GM12878 (cell line): ENCODE measurements at regions of chr10 and their contacts with region 1.

Region 1: DNA sequence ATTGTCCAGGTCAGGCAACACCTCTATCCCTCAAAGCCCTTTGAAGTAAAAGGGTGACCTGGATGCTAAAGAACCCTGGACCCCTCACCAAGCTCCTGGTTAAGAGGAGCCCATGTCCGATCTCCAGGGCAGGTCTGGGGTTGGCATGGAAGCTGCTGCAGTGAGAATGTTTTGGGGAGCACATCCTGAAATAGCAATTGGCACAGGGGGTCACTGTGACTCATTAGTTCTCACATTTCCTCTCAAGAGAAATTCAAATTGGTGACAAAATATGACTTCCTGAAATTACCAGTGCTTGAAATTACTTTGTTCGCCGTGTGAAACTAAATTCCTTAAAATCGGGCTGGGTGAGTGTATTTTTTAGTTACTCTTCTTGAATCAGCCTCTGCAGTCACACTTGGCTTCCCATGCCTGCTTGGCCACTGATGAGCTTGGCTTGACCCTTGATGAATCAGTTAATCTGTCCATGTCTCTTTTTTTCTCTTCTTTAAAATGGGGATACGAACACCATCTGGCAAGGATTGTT is 18.8 kb upstream of the ARHGAP22 start:
- DNase-seq: no peak
- ATAC-seq: no peak
- H3K4me3 ChIP-seq: no peak overlapping the region
- H3K27ac ChIP-seq: no peak overlapping the region
- H3K4me1 ChIP-seq: peaks cover 4% of the 10 kb centered on the region; the same call in 1 of the 2 replicates
- H3K27me3 ChIP-seq: no peaks in the 10 kb centered on the region
- CTCF ChIP-seq: no peak
- EP300 ChIP-seq: no peak
- POLR2A ChIP-seq: no peak
- RAD21 ChIP-seq: no peak

Region 2: GRCh38 chr10:48634198-48634983 is 10.7 kb after region 1 on chr10:
- CTCF ChIA-PET with region 1: interaction called, 20 read pairs
- POLR2A ChIA-PET with region 1: interaction called, 13 read pairs
- RAD21 ChIA-PET with region 1: interaction called, 16 read pairs
- SMC1A ChIA-PET with region 1: interaction called, 39 read pairs
- in situ Hi-C with region 1: no loop called
- intact Hi-C with region 1: no loop called
- DNase-seq: peak; percentile 91
- ATAC-seq: peak; percentile 97
- H3K4me3 ChIP-seq: no peak overlapping the region
- H3K27ac ChIP-seq: peak overlapping the region; percentile 45
- H3K4me1 ChIP-seq: peaks cover 38% of the 10 kb centered on the region
- H3K27me3 ChIP-seq: no peaks in the 10 kb centered on the region
- CTCF ChIP-seq: no peak
- EP300 ChIP-seq: peak; percentile 35 to 41; a peak in 1 of 4 replicates
- POLR2A ChIP-seq: no peak
- RAD21 ChIP-seq: no peak

Region 3: GRCh38 chr10:48639632-48640031 is 16.0 kb after region 1 on chr10:
- CTCF ChIA-PET with region 1: interaction called, 20 read pairs
- POLR2A ChIA-PET with region 1: interaction called, 13 read pairs
- RAD21 ChIA-PET with region 1: interaction called, 16 read pairs
- SMC1A ChIA-PET with region 1: interaction called, 39 read pairs
- in situ Hi-C with region 1: no loop called
- intact Hi-C with region 1: no loop called
- DNase-seq: no peak
- ATAC-seq: peak; percentile 30
- H3K4me3 ChIP-seq: peak overlapping the region; percentile 10; the same call in 1 of the 2 replicates
- H3K27ac ChIP-seq: peak overlapping the region; percentile 53; the same call in 1 of the 2 replicates
- H3K4me1 ChIP-seq: peaks cover 19% of the 10 kb centered on the region
- H3K27me3 ChIP-seq: no peaks in the 10 kb centered on the region
- CTCF ChIP-seq: no peak
- EP300 ChIP-seq: no peak
- POLR2A ChIP-seq: no peak
- RAD21 ChIP-seq: no peak

Region 4: DNA sequence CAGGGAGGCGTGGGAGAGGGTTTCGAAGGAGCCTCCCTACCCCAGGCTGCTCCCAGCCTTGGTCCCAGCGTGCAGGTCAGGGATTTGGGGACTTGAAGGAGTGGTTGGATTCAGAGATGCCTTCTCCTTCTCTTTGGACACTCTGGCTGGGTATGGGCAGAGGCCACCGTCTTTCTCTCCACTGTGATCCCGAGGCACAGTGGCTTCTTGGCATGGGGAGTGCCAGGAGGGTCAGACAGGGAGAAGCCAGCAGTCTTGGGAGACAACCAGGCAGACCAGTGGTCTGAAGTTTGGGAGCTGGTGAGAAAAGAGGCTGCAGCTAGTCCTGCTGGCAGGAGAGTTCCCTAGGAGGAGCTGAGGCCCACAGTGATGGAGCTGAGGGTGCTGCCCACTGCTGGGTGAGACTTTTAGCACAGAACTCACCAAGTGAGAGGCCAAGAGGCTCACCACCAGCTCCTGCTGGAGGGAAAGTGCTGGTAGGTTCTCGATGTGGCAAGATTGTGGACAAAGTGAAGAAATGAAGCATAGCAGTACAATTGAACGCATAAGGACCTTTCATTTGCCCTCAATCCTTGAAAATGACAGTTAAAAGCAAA is 25.8 kb after region 1 on chr10:
- CTCF ChIA-PET with region 1: interaction called, 11 read pairs
- POLR2A ChIA-PET with region 1: no interaction called
- RAD21 ChIA-PET with region 1: interaction called, 33 read pairs
- SMC1A ChIA-PET with region 1: interaction called, 4 read pairs
- in situ Hi-C with region 1: no loop called
- intact Hi-C with region 1: no loop called
- DNase-seq: no peak
- ATAC-seq: peak; percentile 36; the same call in 2 of the 3 replicates
- H3K4me3 ChIP-seq: no peak overlapping the region
- H3K27ac ChIP-seq: no peak overlapping the region
- H3K4me1 ChIP-seq: peaks cover 7% of the 10 kb centered on the region; the same call in 1 of the 2 replicates
- H3K27me3 ChIP-seq: no peaks in the 10 kb centered on the region
- CTCF ChIP-seq: peak; percentile 3 to 24 (median 23); a peak in 2 of 6 replicates
- EP300 ChIP-seq: no peak
- POLR2A ChIP-seq: no peak
- RAD21 ChIP-seq: no peak

Region 5: DNA sequence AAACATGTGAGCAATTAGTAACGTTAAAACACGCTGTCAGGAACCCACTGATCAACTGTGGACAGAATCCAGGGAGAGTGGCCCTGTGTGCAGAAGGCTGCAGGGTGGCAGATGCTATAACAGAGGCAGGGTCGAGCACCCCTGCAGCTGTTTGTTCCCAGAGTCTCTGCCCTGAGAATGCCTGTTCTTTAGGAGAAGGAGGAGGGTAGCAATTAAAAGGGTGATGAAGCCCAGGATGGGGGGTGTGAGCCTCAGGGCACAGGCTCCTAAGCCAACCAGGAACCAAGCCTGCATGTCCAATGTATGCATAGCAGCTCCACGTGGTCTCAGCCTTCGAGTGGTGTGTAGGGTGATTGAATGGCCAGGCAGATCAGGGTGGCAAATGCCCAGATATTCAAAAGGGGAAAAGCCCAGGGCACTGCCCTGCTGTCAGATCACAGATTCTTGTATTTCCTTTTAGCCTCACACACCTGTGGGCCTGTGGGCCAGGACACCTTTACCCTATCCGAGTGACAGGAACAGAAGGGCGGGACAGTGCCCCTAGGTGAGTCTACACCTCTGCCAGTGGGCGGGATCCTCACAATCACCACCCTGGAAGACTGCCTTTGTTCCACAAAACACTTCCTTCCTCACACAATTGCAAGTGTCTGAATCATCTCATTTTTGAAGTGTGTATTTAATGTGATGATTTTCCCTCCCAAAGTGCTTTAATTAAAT is 68.3 kb after region 1 on chr10:
- CTCF ChIA-PET with region 1: no interaction called
- POLR2A ChIA-PET with region 1: no interaction called
- RAD21 ChIA-PET with region 1: no interaction called
- SMC1A ChIA-PET with region 1: no interaction called
- in situ Hi-C with region 1: no loop called
- intact Hi-C with region 1: no loop called
- DNase-seq: no peak
- ATAC-seq: peak; percentile 7; the same call in 2 of the 3 replicates
- H3K4me3 ChIP-seq: no peak overlapping the region
- H3K27ac ChIP-seq: no peak overlapping the region
- H3K4me1 ChIP-seq: peaks cover 15% of the 10 kb centered on the region
- H3K27me3 ChIP-seq: no peaks in the 10 kb centered on the region
- CTCF ChIP-seq: no peak
- EP300 ChIP-seq: no peak
- POLR2A ChIP-seq: no peak
- RAD21 ChIP-seq: no peak

Region 6: DNA sequence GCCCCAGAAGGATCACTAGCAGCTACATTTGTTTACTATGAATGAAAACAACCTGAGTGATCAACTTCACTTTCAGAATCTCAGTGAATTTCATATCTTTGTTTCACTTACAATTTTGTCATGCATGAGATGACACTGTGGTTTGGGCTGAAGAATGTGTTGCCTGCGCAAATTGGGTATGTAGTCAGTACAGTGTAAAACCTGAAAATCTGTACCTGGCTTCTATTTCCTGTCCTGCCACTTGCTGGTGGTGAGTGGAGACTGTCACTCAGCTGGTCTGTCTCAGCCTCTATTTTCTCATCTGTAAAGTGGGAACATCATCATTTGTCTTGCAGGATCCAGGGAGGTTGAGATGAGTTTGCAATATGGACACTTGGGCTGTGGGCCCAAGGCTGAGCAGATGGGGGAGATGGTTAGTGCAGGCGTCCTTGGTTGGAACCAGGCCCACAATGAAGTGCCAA is 179.0 kb after region 1 on chr10:
- CTCF ChIA-PET with region 1: no interaction called
- POLR2A ChIA-PET with region 1: no interaction called
- RAD21 ChIA-PET with region 1: no interaction called
- SMC1A ChIA-PET with region 1: no interaction called
- in situ Hi-C with region 1: no loop called
- intact Hi-C with region 1: no loop called
- DNase-seq: peak; percentile 95
- ATAC-seq: peak; percentile 94
- H3K4me3 ChIP-seq: no peak overlapping the region
- H3K27ac ChIP-seq: peak overlapping the region; percentile 43
- H3K4me1 ChIP-seq: peaks cover 50% of the 10 kb centered on the region
- H3K27me3 ChIP-seq: no peaks in the 10 kb centered on the region
- CTCF ChIP-seq: no peak; a peak in 1 of 6 replicates
- EP300 ChIP-seq: peak; percentile 77 to 92; a peak in 3 of 4 replicates
- POLR2A ChIP-seq: no peak
- RAD21 ChIP-seq: no peak